Activated naive CD4-positive, alpha-beta T cell treated with anti-CD3 and anti-CD28 coated beads for 36 hours (primary cell): ENCODE measurements at regions of chr14 and their contacts with region 1.

Region 1: GRCh38 chr14:106622200-106622745 is 1095.9 kb downstream of the TMEM121 start:
- DNase-seq: peak; percentile 50
- H3K4me3 Mint-ChIP-seq: no peak overlapping the region
- H3K27ac Mint-ChIP-seq: no peak overlapping the region
- H3K4me1 Mint-ChIP-seq: peaks cover 9% of the 10 kb centered on the region
- H3K27me3 Mint-ChIP-seq: peaks cover 25% of the 10 kb centered on the region

Region 2: DNA sequence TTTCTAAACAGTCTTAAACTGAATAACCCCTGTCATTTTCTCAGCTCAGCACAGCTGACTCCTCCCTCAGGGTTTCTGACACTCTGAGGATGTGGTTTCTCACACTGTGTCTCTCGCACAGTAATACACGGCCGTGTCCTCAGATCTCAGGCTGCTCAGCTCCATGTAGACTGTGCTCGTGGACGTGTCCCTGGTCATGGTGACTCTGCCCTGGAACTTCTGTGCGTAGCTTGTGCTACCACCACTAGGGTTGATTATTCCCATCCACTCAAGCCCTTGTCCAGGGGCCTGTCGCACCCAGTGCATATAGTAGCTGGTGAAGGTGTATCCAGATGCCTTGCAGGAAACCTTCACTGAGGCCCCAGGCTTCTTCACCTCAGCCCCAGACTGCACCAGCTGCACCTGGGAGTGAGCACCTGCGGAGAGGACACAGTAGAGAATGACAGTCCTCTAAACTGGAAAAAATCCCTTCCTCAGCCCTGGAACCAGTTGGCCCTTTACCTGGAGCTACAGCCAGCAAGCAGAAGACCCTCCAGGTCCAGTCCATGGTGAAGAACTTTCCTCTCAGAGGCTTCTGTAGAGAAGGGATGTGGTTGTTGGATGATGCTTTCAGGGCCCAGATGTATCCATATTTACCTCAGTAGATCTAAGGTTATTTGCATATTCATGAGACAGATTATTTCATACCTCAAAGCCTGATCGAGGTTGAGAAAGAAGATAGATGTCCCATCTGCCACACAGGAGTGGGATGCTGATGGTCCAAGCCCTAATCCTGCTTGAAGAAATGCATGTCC is 111.1 kb before region 1 on chr14:
- CTCF ChIA-PET with region 1: no interaction called
- intact Hi-C with region 1: no loop called
- DNase-seq: peak; percentile 72
- H3K4me3 Mint-ChIP-seq: no peak overlapping the region
- H3K27ac Mint-ChIP-seq: peak overlapping the region; percentile 16
- H3K4me1 Mint-ChIP-seq: peaks cover 76% of the 10 kb centered on the region
- H3K27me3 Mint-ChIP-seq: no peaks in the 10 kb centered on the region

Region 3: GRCh38 chr14:106605548-106606448 is 16.5 kb before region 1 on chr14:
- CTCF ChIA-PET with region 1: interaction called, 22 read pairs
- intact Hi-C with region 1: no loop called
- DNase-seq: peak; percentile 90
- H3K4me3 Mint-ChIP-seq: no peak overlapping the region
- H3K27ac Mint-ChIP-seq: no peak overlapping the region
- H3K4me1 Mint-ChIP-seq: peaks cover 3% of the 10 kb centered on the region
- H3K27me3 Mint-ChIP-seq: peaks cover 28% of the 10 kb centered on the region

Region 4: GRCh38 chr14:106636107-106636506 is 13.8 kb after region 1 on chr14:
- CTCF ChIA-PET with region 1: interaction called, 10 read pairs
- intact Hi-C with region 1: no loop called
- DNase-seq: no peak
- H3K4me3 Mint-ChIP-seq: no peak overlapping the region
- H3K27ac Mint-ChIP-seq: no peak overlapping the region
- H3K4me1 Mint-ChIP-seq: no peaks in the 10 kb centered on the region
- H3K27me3 Mint-ChIP-seq: no peaks in the 10 kb centered on the region

Region 5: GRCh38 chr14:106657460-106657859 is 35.2 kb after region 1 on chr14:
- CTCF ChIA-PET with region 1: interaction called, 12 read pairs
- intact Hi-C with region 1: no loop called
- DNase-seq: peak; percentile 88
- H3K4me3 Mint-ChIP-seq: no peak overlapping the region
- H3K27ac Mint-ChIP-seq: no peak overlapping the region
- H3K4me1 Mint-ChIP-seq: peaks cover 17% of the 10 kb centered on the region
- H3K27me3 Mint-ChIP-seq: no peaks in the 10 kb centered on the region

Region 6: DNA sequence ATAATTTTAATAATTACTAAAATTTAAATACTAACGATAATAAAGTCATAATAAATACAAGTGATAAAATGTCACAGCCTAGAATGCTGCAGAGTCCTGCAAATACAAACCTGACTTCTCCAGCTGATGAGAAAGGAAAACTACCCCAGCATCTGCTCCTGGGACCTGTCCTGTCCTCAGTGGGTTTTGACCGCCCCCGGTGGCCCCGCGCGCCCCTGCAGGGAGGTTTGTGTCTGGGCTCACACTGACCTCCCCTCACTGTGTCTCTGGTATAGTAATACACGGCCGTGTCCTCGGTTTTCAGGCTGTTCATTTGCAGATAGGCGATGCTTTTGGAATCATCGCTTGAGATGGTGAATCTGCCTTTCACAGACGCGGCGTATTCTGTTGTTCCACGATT is 43.5 kb after region 1 on chr14:
- CTCF ChIA-PET with region 1: interaction called, 12 read pairs
- intact Hi-C with region 1: no loop called
- DNase-seq: no peak
- H3K4me3 Mint-ChIP-seq: no peak overlapping the region
- H3K27ac Mint-ChIP-seq: no peak overlapping the region
- H3K4me1 Mint-ChIP-seq: peaks cover 24% of the 10 kb centered on the region
- H3K27me3 Mint-ChIP-seq: peaks cover 5% of the 10 kb centered on the region